H1 (cell line): ENCODE measurements at regions of chr1 and their contacts with region 1.

Region 1: GRCh38 chr1:154974063-154974807 is at the start of gene CKS1B:
- DNase-seq: peak; percentile 91 to 98
- H3K4me3 ChIP-seq: peak within 1 kb of the TSS; percentile 87 to 99 (median 96)
- H3K27ac ChIP-seq: peak within 1 kb of the TSS; percentile 95
- H3K4me1 ChIP-seq: peaks cover 3 to 13% (median 11%) of the 10 kb centered on the region in 4 experiments; a peak in 6 of 7 replicates
- H3K27me3 ChIP-seq: no peaks in the 10 kb centered on the region
- CTCF ChIP-seq: no peak
- EP300 ChIP-seq: no peak
- POLR2A ChIP-seq: peak; percentile 46 to 82
- RAD21 ChIP-seq: no peak
- total RNA-seq, gene CKS1B: 284 and 294 TPM in 2 replicates

Region 2: GRCh38 chr1:154598871-154599635 is 375.2 kb before region 1 on chr1:
- CTCF ChIA-PET with region 1: no interaction called
- POLR2A ChIA-PET with region 1: no interaction called
- DNase-seq: no peak
- H3K4me3 ChIP-seq: no peak overlapping the region
- H3K27ac ChIP-seq: no peak overlapping the region
- H3K4me1 ChIP-seq: no peaks in the 10 kb centered on the region
- H3K27me3 ChIP-seq: no peaks in the 10 kb centered on the region
- CTCF ChIP-seq: no peak
- EP300 ChIP-seq: no peak
- POLR2A ChIP-seq: no peak
- RAD21 ChIP-seq: no peak

Region 3: GRCh38 chr1:154936555-154937084 is 37.6 kb before region 1 on chr1 and contains the start of gene PMVK:
- CTCF ChIA-PET with region 1: no interaction called
- POLR2A ChIA-PET with region 1: interaction called, 16 read pairs
- DNase-seq: peak; percentile 80 to 94
- H3K4me3 ChIP-seq: peak within 1 kb of the TSS; percentile 71 to 87 (median 72)
- H3K27ac ChIP-seq: peak within 1 kb of the TSS; percentile 99
- H3K4me1 ChIP-seq: peaks cover 4 to 9% (median 7%) of the 10 kb centered on the region in 4 experiments; a peak in 6 of 7 replicates
- H3K27me3 ChIP-seq: no peaks in the 10 kb centered on the region
- CTCF ChIP-seq: peak in 1 of 3 experiments; percentile 1; a peak in 1 of 4 replicates
- EP300 ChIP-seq: no peak
- POLR2A ChIP-seq: peak in 1 of 2 experiments; percentile 63; a peak in 1 of 3 replicates
- RAD21 ChIP-seq: no peak; a peak in 1 of 4 replicates
- total RNA-seq, gene PMVK: 26.5 and 30.5 TPM in 2 replicates

Region 4: GRCh38 chr1:154961497-154962262 is 12.6 kb before region 1 on chr1 and contains the start of gene PYGO2:
- CTCF ChIA-PET with region 1: interaction called, 18 read pairs
- POLR2A ChIA-PET with region 1: interaction called, 662 read pairs
- DNase-seq: peak in 1 of 2 experiments; percentile 91
- H3K4me3 ChIP-seq: peak within 1 kb of the TSS; percentile 50 to 84 (median 54)
- H3K27ac ChIP-seq: peak within 1 kb of the TSS; percentile 99
- H3K4me1 ChIP-seq: peaks cover 2 to 9% (median 5%) of the 10 kb centered on the region in 4 experiments
- H3K27me3 ChIP-seq: no peaks in the 10 kb centered on the region; a peak in 1 of 7 replicates
- CTCF ChIP-seq: peak; percentile 37 to 55 (median 53)
- EP300 ChIP-seq: peak in 1 of 2 experiments; percentile 77; a peak in 1 of 3 replicates
- POLR2A ChIP-seq: peak; percentile 85 to 90
- RAD21 ChIP-seq: peak; percentile 5 to 53; a peak in 1 of 4 replicates
- total RNA-seq, gene PYGO2: 31.6 and 32.4 TPM in 2 replicates